H1 (cell line): ENCODE measurements at regions of chr16 and their contacts with region 1.

Region 1: DNA sequence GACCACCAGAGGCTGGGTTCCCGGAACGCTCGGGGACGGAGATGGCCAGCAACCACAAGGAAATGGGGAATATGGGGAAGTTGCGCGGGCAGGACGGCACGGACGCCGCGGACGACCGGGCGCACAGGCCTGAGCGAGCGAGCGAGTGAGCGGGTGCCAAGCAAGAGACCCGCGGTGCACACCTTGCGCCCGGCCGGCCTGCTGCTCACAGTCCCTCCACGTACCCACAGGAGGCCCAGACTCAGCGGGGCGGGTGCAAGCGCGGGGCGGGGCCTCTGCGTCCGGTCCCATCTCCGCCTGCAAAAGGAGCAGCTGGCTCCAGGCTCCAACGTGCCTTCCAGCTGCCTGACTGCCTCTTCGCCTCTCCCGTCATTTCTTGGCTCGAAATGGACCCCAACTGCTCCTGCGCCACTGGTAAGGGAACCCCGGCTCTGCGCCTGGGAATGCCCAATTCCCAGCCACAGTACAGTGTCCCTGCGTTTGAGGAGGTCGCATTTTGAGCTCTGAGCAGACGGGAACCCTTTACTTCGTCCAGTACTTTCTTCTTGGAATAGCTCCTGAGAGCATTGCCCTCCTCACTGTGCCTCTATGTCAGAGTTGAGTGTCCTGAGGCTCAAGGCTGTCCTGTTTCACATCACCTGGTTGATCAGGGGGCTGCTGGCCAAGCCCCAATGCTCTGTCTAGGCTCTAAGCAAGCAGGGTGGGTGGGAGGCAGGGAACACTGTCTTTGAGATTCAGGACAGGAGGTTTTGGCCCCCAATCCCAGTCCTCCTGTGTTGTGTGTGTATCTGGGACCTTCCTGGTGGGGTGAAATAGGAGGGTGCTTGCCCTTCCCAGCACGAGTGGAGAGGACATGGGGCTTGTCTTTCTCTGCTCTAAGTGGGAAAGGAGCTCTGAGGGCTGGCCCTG is 8.2 kb upstream of the MT1E start:
- DNase-seq: peak in 1 of 2 experiments; percentile 70
- H3K4me3 ChIP-seq: peak overlapping the region; percentile 34 to 57 (median 41)
- H3K27ac ChIP-seq: no peak overlapping the region
- H3K4me1 ChIP-seq: peaks cover 0 to 18% (median 12%) of the 10 kb centered on the region in 4 experiments; a peak in 6 of 7 replicates
- H3K27me3 ChIP-seq: peaks cover 35 to 74% (median 65%) of the 10 kb centered on the region in 4 experiments
- CTCF ChIP-seq: no peak
- EP300 ChIP-seq: no peak
- POLR2A ChIP-seq: no peak
- RAD21 ChIP-seq: no peak

Region 2: DNA sequence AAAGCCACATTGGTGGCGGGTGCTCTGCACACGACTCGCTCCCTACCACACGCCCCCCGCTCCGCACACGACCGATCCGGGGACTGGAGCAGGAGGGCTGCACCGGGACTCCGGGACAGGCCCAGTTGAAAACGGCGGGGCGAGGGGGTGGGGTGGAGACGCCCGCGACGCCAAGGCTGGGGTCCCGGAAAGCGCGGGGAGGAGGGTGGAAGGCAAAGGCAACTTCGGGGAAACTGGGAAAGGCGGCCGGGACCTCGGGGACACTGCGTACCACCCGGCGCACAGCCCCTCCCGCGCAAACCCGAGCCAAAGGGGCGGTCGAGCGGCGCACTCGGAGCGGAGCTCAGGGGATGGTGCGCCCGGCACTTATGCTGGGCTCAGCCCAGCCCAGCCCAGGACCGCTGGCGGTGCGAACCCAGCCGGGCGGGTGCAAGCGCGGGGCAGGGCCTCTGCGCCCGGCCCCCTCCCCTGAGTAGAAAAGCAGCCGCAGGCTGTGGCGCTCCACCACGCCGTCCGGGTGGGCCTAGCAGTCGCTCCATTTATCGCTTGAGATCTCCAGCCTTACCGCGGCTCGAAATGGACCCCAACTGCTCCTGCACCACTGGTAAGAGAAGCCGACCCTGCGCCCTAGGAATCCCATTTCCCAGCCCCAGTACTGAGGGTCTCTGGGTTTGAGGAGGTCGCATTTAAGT is 14.9 kb after region 1 on chr16 and contains the start of gene MT1M:
- CTCF ChIA-PET with region 1: interaction called, 12 read pairs
- POLR2A ChIA-PET with region 1: interaction called, 31 read pairs
- DNase-seq: peak in 1 of 2 experiments; percentile 75
- H3K4me3 ChIP-seq: peak within 1 kb of the TSS; percentile 22 to 56 (median 32); a peak in 6 of 8 replicates
- H3K27ac ChIP-seq: no peak within 1 kb of the TSS
- H3K4me1 ChIP-seq: peaks cover 0 to 12% (median 5%) of the 10 kb centered on the region in 4 experiments; a peak in 6 of 7 replicates
- H3K27me3 ChIP-seq: peaks cover 87 to 98% (median 96%) of the 10 kb centered on the region in 4 experiments
- CTCF ChIP-seq: no peak
- EP300 ChIP-seq: no peak
- POLR2A ChIP-seq: no peak
- RAD21 ChIP-seq: no peak
- total RNA-seq, gene MT1M: not detected in 2 replicates

Region 3: GRCh38 chr16:56691885-56692284 is 74.5 kb after region 1 on chr16:
- CTCF ChIA-PET with region 1: no interaction called
- POLR2A ChIA-PET with region 1: no interaction called
- DNase-seq: no peak
- H3K4me3 ChIP-seq: no peak overlapping the region
- H3K27ac ChIP-seq: no peak overlapping the region
- H3K4me1 ChIP-seq: no peaks in the 10 kb centered on the region
- H3K27me3 ChIP-seq: no peaks in the 10 kb centered on the region
- CTCF ChIP-seq: no peak
- EP300 ChIP-seq: no peak
- POLR2A ChIP-seq: no peak
- RAD21 ChIP-seq: no peak